ACHN (cell line): ENCODE measurements at regions of chr16 and their contacts with region 1.

Region 1: DNA sequence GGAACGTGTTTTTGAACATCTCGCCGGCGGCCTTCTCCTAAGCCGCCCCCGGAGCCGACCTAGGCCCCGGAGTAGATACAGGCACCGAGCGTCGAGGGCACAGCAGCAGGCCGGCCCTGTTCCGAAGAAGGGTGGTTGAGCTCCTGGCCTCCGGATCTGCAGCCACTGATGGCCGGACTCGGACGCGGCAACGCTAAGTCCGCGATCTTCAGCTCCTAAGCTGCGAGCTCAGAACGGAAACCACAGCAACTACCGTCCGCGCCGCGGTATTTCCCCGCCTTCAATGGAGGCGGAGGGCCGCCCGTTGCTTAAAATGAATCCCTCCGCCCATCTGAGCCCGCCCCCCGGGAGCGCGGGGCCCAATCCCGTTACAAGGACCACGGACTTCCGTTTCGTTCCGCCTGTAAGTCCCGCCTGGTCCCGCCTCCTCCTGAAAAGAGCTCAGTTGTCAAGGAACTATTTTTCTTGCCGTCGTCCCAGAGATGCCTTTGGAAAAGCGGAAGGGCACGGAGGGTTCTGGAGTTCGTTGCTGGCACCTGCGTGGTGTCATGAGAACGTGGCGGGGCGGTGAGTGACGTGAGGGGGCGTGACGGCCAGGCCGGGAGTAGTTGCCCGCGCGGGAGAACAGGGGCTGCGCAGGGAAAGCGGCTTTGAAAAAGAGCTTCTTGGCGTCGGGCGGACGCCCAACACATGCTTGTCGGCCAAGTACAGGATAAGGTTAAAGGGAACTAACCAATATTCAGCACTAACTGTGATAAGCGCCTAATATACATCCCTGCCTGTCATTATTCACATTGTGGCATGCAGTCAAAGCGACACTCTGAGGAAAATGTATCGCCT is at the start of gene CFAP20:
- DNase-seq: peak; percentile 100

Region 2: DNA sequence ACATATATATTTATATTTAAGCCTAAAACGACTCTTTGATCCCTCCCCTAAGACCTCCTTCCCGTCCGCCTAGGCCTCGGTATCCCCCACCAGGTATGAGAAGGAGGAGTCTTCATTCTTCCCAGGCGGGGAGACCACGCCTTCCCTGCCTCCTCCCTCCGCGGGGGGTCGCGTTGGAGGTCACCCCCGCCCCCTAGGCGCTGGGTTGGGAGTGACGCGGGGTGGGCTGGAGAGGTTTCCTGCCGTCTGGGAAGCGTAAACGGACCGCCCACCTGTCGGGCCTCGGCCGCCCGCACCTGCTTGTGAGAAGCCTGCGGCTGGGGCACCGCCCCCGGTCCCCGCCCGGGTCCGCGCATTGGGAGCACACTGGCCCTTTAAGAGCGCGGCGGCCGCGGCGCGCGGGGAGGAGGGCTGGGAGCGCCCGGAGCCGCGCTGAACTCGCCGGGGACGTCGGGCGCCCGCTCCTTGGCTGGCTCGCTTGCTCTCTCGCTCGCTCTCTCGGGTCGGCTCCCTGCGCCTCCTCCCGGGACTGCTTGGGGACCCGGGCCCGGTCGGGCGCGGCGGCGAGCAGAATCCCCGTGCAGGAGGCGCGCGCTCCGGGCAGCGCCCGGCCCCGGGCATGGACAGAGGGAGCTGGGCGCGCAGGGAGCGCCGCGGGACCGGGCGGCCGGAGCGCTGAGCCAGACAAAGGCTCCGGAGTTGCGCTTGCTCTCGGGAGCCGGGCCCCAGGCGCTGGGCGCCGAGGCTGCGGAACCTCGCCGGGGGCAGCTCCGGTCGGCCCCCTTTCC is 103.8 kb before region 1 on chr16 and contains the start of gene MMP15:
- in situ Hi-C with region 1: loop called (anchors 10 kb)
- DNase-seq: peak; percentile 84

Region 3: DNA sequence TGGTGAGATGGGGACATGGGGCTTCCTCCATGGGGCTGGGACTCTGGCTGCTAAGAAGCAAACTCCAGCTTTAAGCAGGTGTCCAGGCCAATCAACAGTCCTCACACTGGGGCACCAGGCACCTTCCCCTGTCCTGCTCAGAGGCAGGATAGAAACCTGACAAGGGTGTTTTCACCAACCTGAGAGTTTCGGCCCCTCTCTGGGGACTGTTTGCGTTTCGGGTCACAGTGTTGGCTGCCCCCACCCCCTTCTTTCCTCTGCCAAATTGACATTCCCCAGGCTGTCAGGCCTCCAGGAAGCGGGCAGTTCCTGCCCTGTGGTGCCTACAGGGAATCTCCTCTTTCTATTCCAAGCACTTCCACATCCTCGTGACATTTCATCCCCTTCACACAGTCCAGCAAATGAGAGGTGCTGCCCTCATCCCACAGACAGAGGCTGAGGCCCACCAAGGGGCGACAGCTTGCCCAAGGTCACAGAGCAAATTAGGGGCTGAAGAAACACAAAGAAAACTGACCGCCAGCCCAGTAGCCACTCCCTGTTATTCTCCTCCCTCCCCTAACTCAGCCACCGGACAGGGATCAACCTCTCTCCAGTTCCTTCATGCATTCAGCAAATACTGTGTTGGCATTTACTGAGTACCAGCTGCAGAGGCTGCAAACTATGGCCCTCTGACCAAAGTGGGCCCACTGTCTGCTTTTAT is 65.8 kb before region 1 on chr16:
- in situ Hi-C with region 1: no loop called
- DNase-seq: no peak

Region 4: DNA sequence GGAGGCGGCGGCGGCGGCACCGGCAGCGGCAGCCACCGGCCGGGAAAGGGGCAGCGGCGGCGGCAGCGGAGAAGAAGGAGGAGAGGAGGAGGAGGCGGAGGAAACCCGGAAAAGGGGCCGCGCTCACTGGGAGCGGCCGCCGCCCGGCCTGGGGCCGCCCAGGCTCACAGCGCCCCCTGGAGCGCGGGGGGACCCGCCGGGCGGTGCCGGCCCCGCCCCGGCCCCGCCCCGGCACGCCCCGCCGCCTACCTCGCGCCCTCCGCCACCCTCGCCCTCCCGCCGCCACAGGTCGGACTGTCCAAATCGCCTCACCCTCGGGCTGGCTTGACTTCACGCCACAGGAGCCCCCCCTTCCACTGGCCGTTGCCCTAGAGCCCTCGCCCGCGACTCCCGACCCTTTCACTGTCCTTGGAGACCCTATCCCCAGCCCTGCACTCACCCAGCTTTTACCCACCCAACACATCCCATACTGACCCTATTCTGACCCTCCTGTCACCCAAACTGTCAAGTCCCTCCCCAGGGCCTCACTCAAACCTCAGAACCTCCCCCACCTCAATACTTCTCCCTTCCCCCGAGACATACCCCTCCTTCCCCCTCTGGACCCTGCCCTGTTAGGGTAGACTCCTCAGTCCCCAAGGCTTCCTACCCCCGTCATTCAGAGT is 68.8 kb after region 1 on chr16 and contains the start of gene CSNK2A2:
- in situ Hi-C with region 1: no loop called
- DNase-seq: peak; percentile 81